ENCODE measurements at regions of chr12 and their contacts with region 1.

Region 1: GRCh38 chr12:12334367-12335040 is 15.5 kb downstream of the MANSC1 start:
- DNase-seq: no peak
- H3K4me3 ChIP-seq: no peak overlapping the region
- H3K27ac ChIP-seq: peak overlapping the region in 1 of 4 donors; percentile 22
- H3K4me1 ChIP-seq: peaks cover 0 to 49% (median 15%) of the 10 kb centered on the region in 3 donors
- H3K27me3 ChIP-seq: no peaks in the 10 kb centered on the region
- CTCF ChIP-seq: peak; percentile 66 to 82 (median 75)
- POLR2A ChIP-seq: no peak

Region 2: GRCh38 chr12:12081836-12082497 is 252.5 kb before region 1 on chr12:
- intact Hi-C with region 1: loop called (anchors 10 kb)
- DNase-seq: no peak
- H3K4me3 ChIP-seq: no peak overlapping the region
- H3K27ac ChIP-seq: peak overlapping the region in 3 of 4 donors; percentile 25 to 43 (median 37)
- H3K4me1 ChIP-seq: peaks cover 0 to 6% (median 3%) of the 10 kb centered on the region in 3 donors
- H3K27me3 ChIP-seq: no peaks in the 10 kb centered on the region
- CTCF ChIP-seq: peak in 2 of 6 experiments; percentile 20 to 42
- POLR2A ChIP-seq: no peak

Measured in esophagus squamous epithelium (tissue), 5 donors.